Endothelial cell of umbilical vein (primary cell): ENCODE measurements at regions of chr6 and their contacts with region 1.

Region 1: GRCh38 chr6:72966628-72967280 is 258.5 kb downstream of the KHDC1L start:
- DNase-seq: peak; percentile 72
- H3K4me3 ChIP-seq: no peak overlapping the region
- H3K27ac ChIP-seq: peak overlapping the region; percentile 53
- H3K4me1 ChIP-seq: peaks cover 18% of the 10 kb centered on the region
- H3K27me3 ChIP-seq: no peaks in the 10 kb centered on the region
- CTCF ChIP-seq: no peak
- POLR2A ChIP-seq: no peak

Region 2: GRCh38 chr6:72861935-72862432 is 104.8 kb before region 1 on chr6:
- CTCF ChIA-PET with region 1: interaction called, 3 read pairs
- POLR2A ChIA-PET with region 1: no interaction called
- dilution Hi-C with region 1: no loop called
- intact Hi-C with region 1: loop called (anchors 1 kb)
- DNase-seq: peak; percentile 88
- H3K4me3 ChIP-seq: no peak overlapping the region
- H3K27ac ChIP-seq: peak overlapping the region; percentile 96
- H3K4me1 ChIP-seq: peaks cover 31% of the 10 kb centered on the region
- H3K27me3 ChIP-seq: no peaks in the 10 kb centered on the region
- CTCF ChIP-seq: no peak
- POLR2A ChIP-seq: no peak

Region 3: DNA sequence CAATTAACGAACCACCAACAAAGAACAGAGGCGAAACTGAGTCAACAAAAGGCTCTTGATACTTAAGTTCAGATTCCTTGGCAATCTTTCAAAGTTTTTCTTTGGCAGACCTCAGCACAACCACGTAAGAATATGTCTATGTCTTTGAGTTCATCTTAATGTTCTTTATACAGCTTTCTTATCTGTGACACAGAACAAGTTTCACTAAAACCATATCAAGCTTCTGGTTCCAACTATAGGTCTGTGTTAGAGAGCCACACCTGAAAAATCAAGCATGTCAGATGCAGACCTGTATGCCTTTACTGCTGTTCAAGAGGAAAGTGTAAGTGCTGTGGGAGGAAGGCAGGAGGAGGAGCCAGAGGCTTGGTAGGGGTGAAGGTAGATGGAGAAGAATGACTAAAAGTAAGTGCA is 12.8 kb before region 1 on chr6:
- CTCF ChIA-PET with region 1: no interaction called
- POLR2A ChIA-PET with region 1: no interaction called
- dilution Hi-C with region 1: no loop called
- intact Hi-C with region 1: loop called (anchors 1 kb)
- DNase-seq: peak; percentile 66
- H3K4me3 ChIP-seq: no peak overlapping the region
- H3K27ac ChIP-seq: peak overlapping the region; percentile 97
- H3K4me1 ChIP-seq: peaks cover 37% of the 10 kb centered on the region
- H3K27me3 ChIP-seq: no peaks in the 10 kb centered on the region
- CTCF ChIP-seq: no peak
- POLR2A ChIP-seq: no peak